ENCODE measurements at regions of chr16 and their contacts with region 1.

Region 1: GRCh38 chr16:71484006-71484893 is 4.9 kb downstream of the ZNF19 start:
- DNase-seq: peak; percentile 75
- ATAC-seq: peak; percentile 85
- H3K4me3 Mint-ChIP-seq: peak overlapping the region; percentile 89
- H3K27ac Mint-ChIP-seq: peak overlapping the region; percentile 92
- H3K4me1 Mint-ChIP-seq: peaks cover 17% of the 10 kb centered on the region
- H3K27me3 Mint-ChIP-seq: peaks cover 8% of the 10 kb centered on the region
- CTCF ChIP-seq: no peak

Region 2: GRCh38 chr16:71288890-71289733 is 195.1 kb before region 1 on chr16 and contains the start of gene CMTR2:
- CTCF ChIA-PET with region 1: no interaction called
- POLR2A ChIA-PET with region 1: interaction called, 8 read pairs
- intact Hi-C with region 1: loop called (anchors 1 kb)
- DNase-seq: peak; percentile 90
- ATAC-seq: peak; percentile 89
- H3K4me3 Mint-ChIP-seq: peak within 1 kb of the TSS; percentile 89
- H3K27ac Mint-ChIP-seq: peak within 1 kb of the TSS; percentile 94
- H3K4me1 Mint-ChIP-seq: peaks cover 29% of the 10 kb centered on the region
- H3K27me3 Mint-ChIP-seq: peaks cover 19% of the 10 kb centered on the region
- CTCF ChIP-seq: no peak
- total RNA-seq, gene CMTR2: 28.6 and 35.3 TPM in 2 replicates

Region 3: GRCh38 chr16:71449020-71449419 is 35.2 kb before region 1 on chr16:
- CTCF ChIA-PET with region 1: no interaction called
- POLR2A ChIA-PET with region 1: no interaction called
- intact Hi-C with region 1: no loop called
- DNase-seq: no peak
- ATAC-seq: no peak
- H3K4me3 Mint-ChIP-seq: no peak overlapping the region
- H3K27ac Mint-ChIP-seq: no peak overlapping the region
- H3K4me1 Mint-ChIP-seq: no peaks in the 10 kb centered on the region
- H3K27me3 Mint-ChIP-seq: no peaks in the 10 kb centered on the region
- CTCF ChIP-seq: no peak

Region 4: GRCh38 chr16:71467810-71468209 is 16.4 kb before region 1 on chr16:
- CTCF ChIA-PET with region 1: interaction called, 10 read pairs
- POLR2A ChIA-PET with region 1: interaction called, 94 read pairs
- intact Hi-C with region 1: loop called (anchors 1 kb)
- DNase-seq: no peak
- ATAC-seq: no peak
- H3K4me3 Mint-ChIP-seq: no peak overlapping the region
- H3K27ac Mint-ChIP-seq: no peak overlapping the region
- H3K4me1 Mint-ChIP-seq: peaks cover 3% of the 10 kb centered on the region
- H3K27me3 Mint-ChIP-seq: no peaks in the 10 kb centered on the region
- CTCF ChIP-seq: no peak

Measured in activated B cell treated with CpG ODN at 0.5 μM for 24 hours (primary cell).